ENCODE measurements at regions of chr1 and their contacts with region 1.

Region 1: DNA sequence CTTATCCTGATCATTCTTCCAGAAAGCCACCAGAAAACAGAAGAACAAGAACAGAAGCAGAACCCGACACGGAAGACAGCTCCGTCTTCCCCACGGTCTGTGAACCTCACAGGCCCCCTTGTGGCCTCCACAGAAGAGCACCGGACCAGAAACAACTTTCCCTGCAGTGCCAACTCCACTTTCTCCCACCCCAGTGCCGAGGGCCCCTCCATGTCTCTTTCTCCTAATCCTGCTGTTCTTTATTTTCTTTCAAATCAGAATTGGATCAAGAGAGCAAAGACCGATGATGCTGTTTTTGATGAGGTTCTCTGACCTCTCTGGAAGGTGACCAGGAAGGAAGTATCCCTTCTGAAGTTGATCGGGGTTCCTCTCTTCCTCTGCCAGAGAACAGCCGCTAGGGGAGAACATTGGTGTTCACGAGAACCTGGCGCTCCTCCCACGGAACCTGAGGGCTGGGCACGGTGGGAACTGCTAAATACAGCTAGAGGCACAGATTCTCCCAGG is 58.9 kb upstream of the CTTNBP2NL start:
- DNase-seq: peak; percentile 56
- H3K4me3 ChIP-seq: no peak overlapping the region
- H3K27ac ChIP-seq: no peak overlapping the region
- H3K4me1 ChIP-seq: no peaks in the 10 kb centered on the region
- H3K27me3 ChIP-seq: peaks cover 15 to 24% of the 10 kb centered on the region in 2 experiments
- CTCF ChIP-seq: peak; percentile 60 to 81
- POLR2A ChIP-seq: no peak

Region 2: GRCh38 chr1:113610372-113610771 is 1273.3 kb after region 1 on chr1:
- CTCF ChIA-PET with region 1: no interaction called
- POLR2A ChIA-PET with region 1: no interaction called
- dilution Hi-C with region 1: no loop called
- intact Hi-C with region 1: loop called (anchors 5 kb)
- DNase-seq: no peak
- H3K4me3 ChIP-seq: no peak overlapping the region
- H3K27ac ChIP-seq: no peak overlapping the region
- H3K4me1 ChIP-seq: peaks cover 7% of the 10 kb centered on the region
- H3K27me3 ChIP-seq: no peaks in the 10 kb centered on the region
- CTCF ChIP-seq: no peak
- POLR2A ChIP-seq: no peak